ENCODE measurements at regions of chr2 and their contacts with region 1.

Region 1: GRCh38 chr2:70124983-70125480 is 37.8 kb downstream of the PCBP1 start:
- DNase-seq: peak; percentile 65
- H3K4me3 Mint-ChIP-seq: peak overlapping the region; percentile 84
- H3K27ac Mint-ChIP-seq: peak overlapping the region; percentile 99
- H3K4me1 Mint-ChIP-seq: peaks cover 71% of the 10 kb centered on the region
- H3K27me3 Mint-ChIP-seq: no peaks in the 10 kb centered on the region

Region 2: DNA sequence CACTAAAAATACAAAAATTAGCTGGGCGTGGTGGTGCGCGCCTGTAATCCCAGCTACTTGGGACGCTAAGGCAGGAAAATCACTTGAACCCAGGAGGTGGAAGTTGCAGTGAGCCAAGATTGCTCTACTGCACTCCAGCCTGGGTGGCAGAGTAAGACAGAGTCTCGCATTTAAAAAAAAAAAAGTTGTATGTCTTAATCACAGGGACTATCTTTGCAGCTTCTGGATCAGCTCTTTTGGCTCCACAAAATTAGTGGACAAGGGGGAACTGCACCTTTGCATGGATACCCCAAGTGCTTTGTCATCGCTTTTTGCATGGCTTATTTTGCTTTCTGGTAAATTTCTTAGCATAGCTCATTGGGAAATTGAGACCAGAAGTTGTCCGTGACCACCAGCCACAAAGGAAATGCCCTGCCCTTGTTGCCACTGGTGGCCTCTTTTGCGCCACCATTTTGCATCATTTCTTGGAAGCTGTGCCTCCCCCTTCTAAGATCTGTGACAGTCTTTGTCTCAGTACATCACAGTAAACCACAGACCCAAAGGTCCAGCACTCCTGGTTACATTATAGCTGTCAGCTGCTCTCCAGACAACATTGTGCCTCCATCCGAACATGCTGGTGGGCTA is 81.7 kb before region 1 on chr2:
- CTCF ChIA-PET with region 1: no interaction called
- POLR2A ChIA-PET with region 1: interaction called, 11 read pairs
- DNase-seq: peak; percentile 89
- H3K4me3 Mint-ChIP-seq: peak overlapping the region; percentile 44
- H3K27ac Mint-ChIP-seq: peak overlapping the region; percentile 97
- H3K4me1 Mint-ChIP-seq: peaks cover 75% of the 10 kb centered on the region
- H3K27me3 Mint-ChIP-seq: no peaks in the 10 kb centered on the region

Region 3: GRCh38 chr2:70094978-70095719 is 29.9 kb before region 1 on chr2:
- CTCF ChIA-PET with region 1: interaction called, 8 read pairs
- POLR2A ChIA-PET with region 1: interaction called, 856 read pairs
- DNase-seq: peak; percentile 68
- H3K4me3 Mint-ChIP-seq: peak overlapping the region; percentile 68
- H3K27ac Mint-ChIP-seq: peak overlapping the region; percentile 87
- H3K4me1 Mint-ChIP-seq: peaks cover 54% of the 10 kb centered on the region
- H3K27me3 Mint-ChIP-seq: no peaks in the 10 kb centered on the region

Region 4: GRCh38 chr2:70190418-70191243 is 65.6 kb after region 1 on chr2 and contains the start of gene C2orf42:
- CTCF ChIA-PET with region 1: interaction called, 3 read pairs
- POLR2A ChIA-PET with region 1: interaction called, 18 read pairs
- DNase-seq: peak; percentile 96
- H3K4me3 Mint-ChIP-seq: peak within 1 kb of the TSS; percentile 82
- H3K27ac Mint-ChIP-seq: peak within 1 kb of the TSS; percentile 87
- H3K4me1 Mint-ChIP-seq: peaks cover 23% of the 10 kb centered on the region
- H3K27me3 Mint-ChIP-seq: no peaks in the 10 kb centered on the region
- total RNA-seq, gene C2orf42: 28.8 to 32.2 TPM

Region 5: GRCh38 chr2:70226781-70227180 is 101.7 kb after region 1 on chr2:
- CTCF ChIA-PET with region 1: no interaction called
- POLR2A ChIA-PET with region 1: no interaction called
- DNase-seq: no peak
- H3K4me3 Mint-ChIP-seq: no peak overlapping the region
- H3K27ac Mint-ChIP-seq: peak overlapping the region; percentile 0
- H3K4me1 Mint-ChIP-seq: peaks cover 10% of the 10 kb centered on the region
- H3K27me3 Mint-ChIP-seq: no peaks in the 10 kb centered on the region

Region 6: DNA sequence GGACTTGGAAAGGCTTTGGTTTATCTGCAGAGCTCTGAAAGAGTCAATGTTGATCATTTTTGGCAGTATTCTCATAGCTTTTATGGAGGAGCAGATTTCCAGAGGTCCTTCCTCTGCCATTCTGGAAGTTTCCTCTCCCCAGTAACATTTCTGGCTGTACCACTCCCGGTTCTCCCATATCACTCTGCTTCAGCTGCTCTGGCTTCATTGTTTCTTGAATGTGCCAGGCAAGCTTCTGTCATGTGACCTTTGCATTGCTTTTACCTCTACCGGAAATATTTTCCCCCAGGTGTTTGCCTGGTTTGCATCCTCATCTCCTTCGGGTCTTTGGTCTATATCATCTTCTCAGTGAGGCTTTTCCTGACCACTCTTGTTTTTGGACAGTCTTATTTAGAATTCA is 145.3 kb after region 1 on chr2:
- CTCF ChIA-PET with region 1: no interaction called
- POLR2A ChIA-PET with region 1: no interaction called
- DNase-seq: no peak
- H3K4me3 Mint-ChIP-seq: no peak overlapping the region
- H3K27ac Mint-ChIP-seq: no peak overlapping the region
- H3K4me1 Mint-ChIP-seq: peaks cover 1% of the 10 kb centered on the region
- H3K27me3 Mint-ChIP-seq: no peaks in the 10 kb centered on the region

Measured in activated CD4-positive, alpha-beta memory T cell treated with anti-CD3 and anti-CD28 coated beads, Interleukin-2, amount 10 ng/mL, durations not matched to agents 7 days and 5 days (primary cell).